Calu3 (cell line): ENCODE measurements at regions of chr11 and their contacts with region 1.

Region 1: GRCh38 chr11:44936525-44936924 is 14.2 kb downstream of the TP53I11 start:
- DNase-seq: peak; percentile 87
- H3K4me3 Mint-ChIP-seq: no peak overlapping the region
- H3K27ac Mint-ChIP-seq: no peak overlapping the region
- H3K4me1 Mint-ChIP-seq: no peaks in the 10 kb centered on the region
- H3K27me3 Mint-ChIP-seq: peaks cover 35% of the 10 kb centered on the region
- CTCF ChIP-seq: peak; percentile 96

Region 2: GRCh38 chr11:44979543-44980399 is 43.2 kb after region 1 on chr11:
- CTCF ChIA-PET with region 1: interaction called, 14 read pairs
- intact Hi-C with region 1: no loop called
- DNase-seq: peak; percentile 87
- H3K4me3 Mint-ChIP-seq: no peak overlapping the region
- H3K27ac Mint-ChIP-seq: no peak overlapping the region
- H3K4me1 Mint-ChIP-seq: no peaks in the 10 kb centered on the region
- H3K27me3 Mint-ChIP-seq: no peaks in the 10 kb centered on the region
- CTCF ChIP-seq: no peak

Region 3: GRCh38 chr11:45102810-45103621 is 166.5 kb after region 1 on chr11:
- CTCF ChIA-PET with region 1: interaction called, 116 read pairs
- intact Hi-C with region 1: loop called (anchors 1 kb)
- DNase-seq: peak; percentile 62
- H3K4me3 Mint-ChIP-seq: no peak overlapping the region
- H3K27ac Mint-ChIP-seq: no peak overlapping the region
- H3K4me1 Mint-ChIP-seq: peaks cover 7% of the 10 kb centered on the region
- H3K27me3 Mint-ChIP-seq: peaks cover 80% of the 10 kb centered on the region
- CTCF ChIP-seq: peak; percentile 93

Region 4: GRCh38 chr11:45339729-45340519 is 403.4 kb after region 1 on chr11:
- CTCF ChIA-PET with region 1: no interaction called
- intact Hi-C with region 1: loop called (anchors 10 kb)
- DNase-seq: peak; percentile 97
- H3K4me3 Mint-ChIP-seq: peak overlapping the region; percentile 5
- H3K27ac Mint-ChIP-seq: no peak overlapping the region
- H3K4me1 Mint-ChIP-seq: peaks cover 13% of the 10 kb centered on the region
- H3K27me3 Mint-ChIP-seq: peaks cover 86% of the 10 kb centered on the region
- CTCF ChIP-seq: peak; percentile 94